Psoas muscle (tissue), 8 donors: ENCODE measurements at regions of chr18 and their contacts with region 1.

Region 1: DNA sequence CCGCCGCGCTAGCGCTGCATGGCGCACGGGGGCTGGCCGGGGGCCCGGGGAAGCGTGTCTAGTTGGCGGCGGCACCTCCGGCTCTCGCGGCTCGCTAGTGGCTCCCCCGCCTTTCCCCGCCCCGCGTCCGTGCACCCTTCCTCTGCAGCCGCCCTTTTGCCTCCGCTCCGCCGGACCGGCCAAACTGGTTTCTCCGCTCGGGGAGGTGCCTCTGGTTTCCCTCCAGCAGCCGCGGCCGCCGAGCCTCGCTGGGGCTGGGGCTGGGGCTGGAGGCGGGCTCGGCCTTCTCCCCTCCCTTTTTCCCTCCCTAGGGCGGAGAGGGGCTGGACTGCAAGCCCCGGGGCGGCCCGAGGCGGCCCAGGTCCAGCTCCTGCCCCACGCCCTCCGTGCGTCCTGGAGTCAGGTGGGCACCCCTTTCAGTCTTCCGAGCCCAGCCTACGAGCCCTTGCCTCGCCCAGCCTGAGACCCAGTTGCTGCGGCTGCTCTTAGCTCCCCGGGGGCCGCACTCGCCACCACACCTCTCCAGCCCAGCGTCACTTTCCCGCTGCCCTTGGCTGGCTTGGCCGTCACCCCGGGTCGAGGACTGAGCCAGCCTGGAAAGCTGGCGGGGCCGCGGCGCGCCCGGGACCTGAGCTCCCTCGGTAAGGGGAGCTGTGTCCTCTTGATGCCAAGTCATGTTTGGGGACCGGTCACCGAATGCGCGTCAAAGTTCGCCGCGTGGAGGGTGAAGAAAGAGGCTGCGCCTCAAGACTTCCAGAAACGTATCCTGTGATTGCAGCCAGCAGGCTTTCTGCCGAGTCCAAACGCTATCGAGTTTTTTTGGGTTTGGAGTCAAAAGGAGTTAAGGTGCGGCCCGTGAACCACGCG is at the start of gene ATP8B1:
- DNase-seq: peak; percentile 65 to 86
- ATAC-seq: peak; percentile 83 to 93 (median 87)
- H3K4me3 ChIP-seq: peak within 1 kb of the TSS; percentile 75
- H3K27ac ChIP-seq: peak within 1 kb of the TSS; percentile 71
- H3K4me1 ChIP-seq: peaks cover 22% of the 10 kb centered on the region
- H3K27me3 ChIP-seq: peaks cover 0 to 4% (median 0%) of the 10 kb centered on the region in 3 donors
- CTCF ChIP-seq: no peak
- total RNA-seq, gene ATP8B1: 1.2 to 2.5 (median 1.7) TPM

Region 2: DNA sequence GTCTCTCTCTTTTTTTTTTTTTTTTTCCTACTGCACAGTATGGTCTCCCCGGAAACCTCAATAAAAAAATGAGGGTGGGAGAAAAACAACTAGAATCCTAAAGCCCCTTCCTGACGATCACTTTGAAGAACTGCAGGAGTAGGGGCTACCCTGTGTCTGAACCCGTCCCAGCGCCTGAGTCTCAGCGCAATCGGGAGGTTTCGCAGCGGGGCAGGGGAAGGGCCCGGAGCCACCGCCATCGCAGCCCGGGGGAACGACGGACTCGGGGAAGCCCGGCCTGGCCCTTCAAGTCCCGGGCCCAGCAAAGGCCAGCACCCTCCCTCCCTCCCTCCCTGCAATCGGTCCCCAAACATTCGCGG is 182.1 kb before region 1 on chr18:
- intact Hi-C with region 1: loop called in 1 of 2 experiments (anchors 5 kb)
- DNase-seq: no peak
- ATAC-seq: peak; percentile 26 to 52 (median 35)
- H3K4me3 ChIP-seq: peak overlapping the region; percentile 73
- H3K27ac ChIP-seq: peak overlapping the region; percentile 95
- H3K4me1 ChIP-seq: peaks cover 15% of the 10 kb centered on the region
- H3K27me3 ChIP-seq: no peaks in the 10 kb centered on the region
- CTCF ChIP-seq: no peak

Region 3: GRCh38 chr18:57649556-57650500 is 153.5 kb before region 1 on chr18:
- intact Hi-C with region 1: loop called in 1 of 2 experiments (anchors 10 kb)
- DNase-seq: no peak
- ATAC-seq: peak in 1 of 4 donors; percentile 71
- H3K4me3 ChIP-seq: no peak overlapping the region
- H3K27ac ChIP-seq: no peak overlapping the region
- H3K4me1 ChIP-seq: no peaks in the 10 kb centered on the region
- H3K27me3 ChIP-seq: no peaks in the 10 kb centered on the region
- CTCF ChIP-seq: no peak

Region 4: DNA sequence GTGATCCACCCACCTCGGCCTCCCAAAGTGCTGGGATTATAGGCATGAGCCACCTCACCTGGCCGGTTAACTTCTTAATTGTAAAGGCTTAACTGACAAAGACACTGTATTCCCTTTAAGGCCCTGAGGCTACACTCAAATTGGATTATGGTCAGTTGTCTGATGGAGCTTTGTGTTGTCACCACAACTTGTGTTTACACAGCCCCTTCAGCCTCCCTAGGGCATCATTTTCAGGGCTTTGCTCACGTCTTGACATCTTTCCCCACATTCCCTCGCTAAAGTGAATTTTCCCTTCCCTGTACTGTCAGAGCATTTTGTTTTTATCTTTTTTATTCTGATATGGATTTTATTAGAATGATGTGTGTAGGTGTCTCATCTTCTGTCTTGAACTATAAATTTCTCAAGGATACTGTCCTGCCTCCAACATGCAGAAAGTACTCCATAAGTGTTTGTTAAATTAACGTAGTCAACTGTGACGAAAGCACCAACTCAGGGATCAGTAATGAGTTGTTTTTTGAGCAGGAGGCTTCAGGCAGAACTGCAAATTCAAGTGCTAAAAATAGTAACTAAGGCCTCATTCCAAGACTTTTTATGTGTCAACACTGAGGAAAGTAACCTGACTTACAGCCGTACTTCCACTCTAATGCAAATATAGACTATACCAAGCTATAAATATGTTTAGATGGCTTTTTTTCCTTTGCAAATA is 104.6 kb before region 1 on chr18:
- intact Hi-C with region 1: loop called in 1 of 2 experiments (anchors 5 kb)
- DNase-seq: no peak
- ATAC-seq: peak in 3 of 4 donors; percentile 66 to 93 (median 71)
- H3K4me3 ChIP-seq: peak overlapping the region; percentile 31
- H3K27ac ChIP-seq: peak overlapping the region; percentile 75
- H3K4me1 ChIP-seq: peaks cover 7% of the 10 kb centered on the region
- H3K27me3 ChIP-seq: no peaks in the 10 kb centered on the region
- CTCF ChIP-seq: no peak

Region 5: DNA sequence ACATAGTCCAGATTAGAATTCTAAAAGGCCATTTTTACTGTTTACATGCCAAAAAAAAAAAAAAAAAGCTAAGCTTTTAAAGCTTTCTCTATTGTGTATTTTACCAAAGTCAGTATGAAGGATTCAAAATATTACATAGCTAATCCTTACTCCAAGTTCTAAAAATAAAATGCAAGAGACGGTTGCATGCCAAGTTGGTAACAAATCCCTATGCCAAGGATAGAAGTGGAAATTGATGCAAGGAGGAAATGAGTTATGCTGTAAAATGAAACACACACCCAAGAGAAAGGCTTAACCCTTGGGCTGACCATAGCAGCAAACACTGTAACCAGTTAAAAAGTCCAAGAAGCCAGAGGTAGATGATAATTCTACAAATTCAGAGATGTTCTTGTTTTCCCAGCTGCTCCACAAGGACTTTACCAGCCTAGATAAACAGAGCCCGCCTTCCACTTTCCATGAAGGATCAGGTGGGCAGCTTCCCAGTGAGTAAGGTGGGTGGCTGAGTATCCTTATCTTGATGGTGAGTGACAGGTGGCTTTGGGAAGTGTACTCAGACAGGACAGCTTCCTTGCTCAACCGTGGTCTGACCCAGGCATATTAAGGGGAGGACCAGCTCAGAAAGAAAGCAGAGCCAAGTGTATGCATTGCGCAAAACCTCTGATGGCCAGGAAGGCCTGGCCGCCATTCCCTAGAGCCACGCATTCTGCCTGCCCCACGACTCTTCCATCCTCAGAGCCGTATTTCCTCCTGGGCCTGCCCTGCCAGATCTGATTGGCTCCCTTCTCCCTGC is 34.6 kb before region 1 on chr18:
- intact Hi-C with region 1: loop called (anchors 5 kb)
- DNase-seq: peak in 1 of 2 donors; percentile 53
- ATAC-seq: peak; percentile 77 to 83 (median 80)
- H3K4me3 ChIP-seq: peak overlapping the region; percentile 35
- H3K27ac ChIP-seq: peak overlapping the region; percentile 88
- H3K4me1 ChIP-seq: peaks cover 63% of the 10 kb centered on the region
- H3K27me3 ChIP-seq: no peaks in the 10 kb centered on the region
- CTCF ChIP-seq: no peak